Heart right ventricle (tissue), 16 donors: ENCODE measurements at regions of chr12 and their contacts with region 1.

Region 1: DNA sequence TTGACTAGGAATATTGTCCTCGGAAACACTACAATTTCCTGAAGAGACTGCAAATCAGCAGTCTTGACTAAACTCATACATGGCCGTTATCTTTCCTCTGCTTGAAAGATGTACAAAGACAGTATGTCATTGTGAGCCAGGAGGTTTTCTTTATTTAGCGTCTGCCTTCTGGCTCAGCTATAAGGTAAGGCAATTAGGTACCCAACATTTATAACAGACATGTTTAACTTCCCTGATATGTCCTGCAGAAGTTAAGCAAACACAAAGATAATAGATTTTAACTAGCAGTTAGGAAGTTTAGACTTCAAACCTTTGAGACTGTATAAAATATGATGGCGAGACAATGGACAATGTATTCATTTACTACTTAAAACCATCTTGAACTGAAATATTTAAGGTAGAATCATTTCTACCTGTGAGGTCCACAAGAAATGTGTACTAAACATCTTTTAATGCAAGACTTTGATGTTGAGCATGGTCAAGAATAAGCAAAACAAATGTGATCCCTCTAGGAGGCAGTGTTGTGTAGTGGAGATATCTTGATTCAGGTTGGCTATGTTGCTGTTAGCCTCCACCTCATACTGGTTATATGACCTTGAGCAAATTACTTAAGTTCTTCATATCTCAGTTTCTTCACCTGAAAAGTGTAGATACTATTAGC is 96.2 kb upstream of the EEA1 start:
- DNase-seq: peak in 1 of 2 donors; percentile 28
- ATAC-seq: peak in 4 of 8 donors; percentile 55 to 62 (median 59)
- H3K4me3 ChIP-seq: no peak overlapping the region
- H3K27ac ChIP-seq: peak overlapping the region in 2 of 10 donors; percentile 23 to 37
- H3K4me1 ChIP-seq: peaks cover 0 to 25% (median 6%) of the 10 kb centered on the region in 9 donors
- H3K27me3 ChIP-seq: no peaks in the 10 kb centered on the region
- CTCF ChIP-seq: peak in 8 of 9 donors; percentile 33 to 67 (median 61)

Region 2: GRCh38 chr12:93109551-93110203 is 84.4 kb after region 1 on chr12:
- intact Hi-C with region 1: loop called in 1 of 10 experiments (anchors 5 kb)
- DNase-seq: no peak
- ATAC-seq: peak in 4 of 8 donors; percentile 8 to 54 (median 16)
- H3K4me3 ChIP-seq: no peak overlapping the region
- H3K27ac ChIP-seq: peak overlapping the region in 4 of 10 donors; percentile 8 to 55 (median 36)
- H3K4me1 ChIP-seq: peaks cover 0 to 52% (median 31%) of the 10 kb centered on the region in 9 donors
- H3K27me3 ChIP-seq: no peaks in the 10 kb centered on the region
- CTCF ChIP-seq: no peak

Region 3: GRCh38 chr12:93174048-93174447 is 148.8 kb after region 1 on chr12:
- intact Hi-C with region 1: loop called in 1 of 10 experiments (anchors 5 kb)
- DNase-seq: peak in 1 of 2 donors; percentile 35
- ATAC-seq: peak; percentile 63 to 86 (median 74)
- H3K4me3 ChIP-seq: no peak overlapping the region
- H3K27ac ChIP-seq: peak overlapping the region; percentile 3 to 87 (median 76)
- H3K4me1 ChIP-seq: peaks cover 8 to 57% (median 36%) of the 10 kb centered on the region in 9 donors
- H3K27me3 ChIP-seq: no peaks in the 10 kb centered on the region
- CTCF ChIP-seq: no peak

Region 4: DNA sequence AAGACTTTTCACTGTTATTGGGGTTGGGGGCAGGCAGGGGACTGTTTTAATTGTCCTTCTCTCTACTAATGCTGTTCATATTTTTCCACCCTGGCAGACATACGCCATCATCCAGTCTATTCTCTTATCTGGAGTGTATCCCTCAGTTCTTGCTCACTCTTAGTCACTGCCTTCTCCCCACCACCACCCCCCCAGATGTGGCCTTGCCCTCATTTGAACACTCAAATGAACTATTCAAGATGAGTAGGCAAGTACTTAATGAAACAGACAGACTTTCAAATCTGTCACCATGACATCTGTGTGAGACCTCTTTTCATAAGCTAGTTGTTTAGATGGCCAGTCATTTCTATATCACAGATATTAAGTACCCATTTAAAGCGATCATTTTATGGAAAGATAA is 362.5 kb after region 1 on chr12:
- intact Hi-C with region 1: loop called in 5 of 10 experiments (anchors 5 to 10 kb)
- DNase-seq: no peak
- ATAC-seq: peak in 4 of 8 donors; percentile 30 to 58 (median 48)
- H3K4me3 ChIP-seq: no peak overlapping the region
- H3K27ac ChIP-seq: peak overlapping the region in 5 of 10 donors; percentile 6 to 50 (median 23)
- H3K4me1 ChIP-seq: peaks cover 3 to 92% (median 66%) of the 10 kb centered on the region in 9 donors
- H3K27me3 ChIP-seq: no peaks in the 10 kb centered on the region
- CTCF ChIP-seq: no peak

Region 5: DNA sequence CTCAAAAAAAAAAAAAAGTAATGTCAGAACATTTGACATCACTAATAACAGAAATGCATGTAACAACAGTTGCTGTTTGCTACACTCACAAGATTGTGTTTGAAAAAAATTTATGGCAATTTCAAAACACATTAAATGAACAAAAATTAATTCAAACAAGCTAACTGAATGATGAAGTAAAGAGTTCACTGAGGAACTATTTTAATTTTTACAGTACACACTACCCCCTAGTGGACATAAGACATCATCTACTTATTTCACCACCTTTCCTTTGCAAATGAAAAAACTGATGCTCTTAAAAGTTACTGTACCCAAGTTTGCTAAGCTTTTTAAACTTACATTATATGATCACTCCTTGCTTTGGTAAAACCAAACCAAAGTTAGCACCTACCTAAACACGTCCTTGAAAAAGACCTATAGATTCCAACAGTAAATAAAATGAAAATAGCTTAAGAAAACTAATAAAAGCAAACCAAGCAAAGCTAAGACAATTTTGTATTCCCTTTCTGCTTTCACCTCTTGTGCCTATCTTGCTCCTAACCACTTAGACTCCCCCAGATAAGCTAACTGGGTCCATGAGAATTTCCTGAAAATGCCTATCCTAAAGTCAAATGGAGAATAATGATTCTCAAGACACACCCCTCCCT is 394.2 kb after region 1 on chr12:
- intact Hi-C with region 1: loop called in 1 of 10 experiments (anchors 5 kb)
- DNase-seq: no peak
- ATAC-seq: peak in 7 of 8 donors; percentile 51 to 75 (median 56)
- H3K4me3 ChIP-seq: peak overlapping the region in 1 of 10 donors; percentile 4
- H3K27ac ChIP-seq: peak overlapping the region in 2 of 10 donors; percentile 1 to 2
- H3K4me1 ChIP-seq: peaks cover 2 to 82% (median 67%) of the 10 kb centered on the region in 9 donors
- H3K27me3 ChIP-seq: no peaks in the 10 kb centered on the region
- CTCF ChIP-seq: peak; percentile 48 to 81 (median 72)